ENCODE measurements at regions of chr19 and their contacts with region 1.

Region 1: DNA sequence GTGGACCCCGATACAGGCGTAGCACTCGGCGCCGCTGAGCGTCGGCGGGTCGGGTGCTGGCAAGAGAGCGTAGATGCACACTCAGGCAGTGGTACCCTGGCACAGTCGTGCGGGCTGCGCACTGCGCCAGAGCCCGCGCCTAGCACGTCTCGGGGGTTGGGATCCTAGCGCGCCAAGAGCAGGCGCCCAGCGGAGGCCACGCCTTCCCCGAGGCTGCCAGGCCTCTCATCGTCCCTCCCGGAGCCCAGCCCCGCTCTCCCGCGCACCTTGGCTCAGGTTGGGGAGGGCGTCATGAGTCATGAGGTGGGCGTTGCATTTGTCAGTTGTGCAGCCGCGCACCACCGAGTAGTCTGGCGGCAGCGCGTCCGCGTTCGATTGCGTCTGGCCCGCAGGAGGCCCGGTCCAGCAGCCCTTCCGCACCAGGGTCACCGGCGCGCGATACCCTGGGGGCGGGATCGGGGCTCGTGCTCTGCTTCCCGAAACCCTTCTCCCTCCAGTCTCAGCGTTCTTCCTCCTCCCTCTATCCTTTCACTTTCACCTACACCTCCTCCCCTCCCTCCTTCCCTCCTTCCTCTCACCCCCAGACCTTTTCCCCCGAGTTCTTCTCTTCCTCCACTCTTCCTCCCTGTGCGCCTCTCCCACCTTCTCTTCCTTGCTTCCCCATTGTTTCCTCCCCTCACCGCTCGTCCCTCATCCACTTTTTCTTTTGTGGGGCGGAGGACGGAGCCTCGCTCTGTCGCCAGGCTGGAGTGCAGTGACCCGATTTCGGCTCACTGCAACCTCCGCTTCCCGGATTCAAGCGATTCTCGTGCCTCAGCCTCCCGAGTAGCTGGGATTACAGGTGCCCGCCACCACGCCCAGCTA is 3.5 kb downstream of the LYPD5 start:
- DNase-seq: peak; percentile 71 to 80
- H3K4me3 ChIP-seq: peak overlapping the region; percentile 52 to 68 (median 61)
- H3K27ac ChIP-seq: peak overlapping the region; percentile 41 to 65
- H3K4me1 ChIP-seq: no peaks in the 10 kb centered on the region
- H3K27me3 ChIP-seq: no peaks in the 10 kb centered on the region
- CTCF ChIP-seq: no peak
- POLR2A ChIP-seq: no peak

Region 2: GRCh38 chr19:43769296-43770050 is 29.3 kb before region 1 on chr19:
- intact Hi-C with region 1: loop called (anchors 2 kb)
- DNase-seq: no peak
- H3K4me3 ChIP-seq: no peak overlapping the region
- H3K27ac ChIP-seq: peak overlapping the region; percentile 57 to 63
- H3K4me1 ChIP-seq: peaks cover 0 to 5% of the 10 kb centered on the region in 2 donors
- H3K27me3 ChIP-seq: no peaks in the 10 kb centered on the region
- CTCF ChIP-seq: no peak
- POLR2A ChIP-seq: no peak

Region 3: DNA sequence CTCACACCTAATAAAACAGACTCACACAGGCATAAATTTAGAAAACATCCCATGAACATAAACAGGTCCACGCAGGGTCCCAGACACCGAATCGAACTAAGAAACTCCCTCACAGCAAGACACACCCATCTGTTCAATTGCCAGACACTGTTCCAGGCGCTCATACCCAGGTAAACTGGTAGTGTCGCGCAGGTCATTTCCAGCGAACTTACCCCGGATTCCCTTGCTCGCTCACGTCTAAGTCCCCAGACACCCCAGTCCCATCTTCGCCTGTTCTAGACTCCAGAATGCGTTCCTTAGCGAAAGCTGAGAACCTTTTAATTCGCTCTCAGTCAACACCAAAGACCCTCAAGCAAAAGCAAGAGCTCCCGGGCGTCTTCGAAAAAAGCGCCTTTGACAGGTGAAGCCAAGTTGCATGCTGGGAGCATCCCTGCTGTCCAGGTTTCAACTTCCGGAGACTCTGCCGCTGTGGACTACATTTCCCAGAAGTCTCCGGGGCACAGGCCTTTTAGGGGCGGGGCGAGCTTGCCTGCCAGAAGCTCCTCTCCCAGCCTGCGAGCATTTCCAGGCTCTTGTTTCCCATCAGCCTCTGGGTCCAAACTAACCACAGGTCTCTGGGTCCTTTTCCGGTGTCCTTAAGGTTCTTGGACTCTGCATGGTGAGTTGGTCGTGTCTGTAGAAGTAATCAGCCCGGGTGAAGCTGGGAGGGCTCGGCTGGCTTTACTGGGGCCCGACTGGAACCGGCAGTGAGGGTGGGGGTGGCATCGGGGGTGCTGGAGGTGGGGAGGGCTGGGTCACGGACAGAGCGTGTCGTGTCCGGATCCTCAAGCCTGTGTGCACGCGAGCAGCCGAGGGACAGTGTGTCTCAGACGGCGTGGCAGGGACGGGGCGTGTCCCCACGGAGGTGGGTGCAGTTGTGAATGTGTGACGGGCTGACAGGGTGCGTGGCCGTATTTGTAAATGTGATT is 28.3 kb after region 1 on chr19 and contains the start of gene ZNF283:
- intact Hi-C with region 1: no loop called
- DNase-seq: peak; percentile 85 to 88
- H3K4me3 ChIP-seq: peak within 1 kb of the TSS; percentile 57 to 71 (median 71)
- H3K27ac ChIP-seq: peak within 1 kb of the TSS; percentile 59 to 62
- H3K4me1 ChIP-seq: no peaks in the 10 kb centered on the region
- H3K27me3 ChIP-seq: no peaks in the 10 kb centered on the region
- CTCF ChIP-seq: no peak
- POLR2A ChIP-seq: no peak
- total RNA-seq, gene ZNF283: 6.9 to 19.6 (median 13.8) TPM

Region 4: GRCh38 chr19:43842007-43842406 is 43.2 kb after region 1 on chr19:
- intact Hi-C with region 1: no loop called
- DNase-seq: no peak
- H3K4me3 ChIP-seq: no peak overlapping the region
- H3K27ac ChIP-seq: no peak overlapping the region
- H3K4me1 ChIP-seq: no peaks in the 10 kb centered on the region
- H3K27me3 ChIP-seq: no peaks in the 10 kb centered on the region
- CTCF ChIP-seq: no peak
- POLR2A ChIP-seq: no peak

Region 5: DNA sequence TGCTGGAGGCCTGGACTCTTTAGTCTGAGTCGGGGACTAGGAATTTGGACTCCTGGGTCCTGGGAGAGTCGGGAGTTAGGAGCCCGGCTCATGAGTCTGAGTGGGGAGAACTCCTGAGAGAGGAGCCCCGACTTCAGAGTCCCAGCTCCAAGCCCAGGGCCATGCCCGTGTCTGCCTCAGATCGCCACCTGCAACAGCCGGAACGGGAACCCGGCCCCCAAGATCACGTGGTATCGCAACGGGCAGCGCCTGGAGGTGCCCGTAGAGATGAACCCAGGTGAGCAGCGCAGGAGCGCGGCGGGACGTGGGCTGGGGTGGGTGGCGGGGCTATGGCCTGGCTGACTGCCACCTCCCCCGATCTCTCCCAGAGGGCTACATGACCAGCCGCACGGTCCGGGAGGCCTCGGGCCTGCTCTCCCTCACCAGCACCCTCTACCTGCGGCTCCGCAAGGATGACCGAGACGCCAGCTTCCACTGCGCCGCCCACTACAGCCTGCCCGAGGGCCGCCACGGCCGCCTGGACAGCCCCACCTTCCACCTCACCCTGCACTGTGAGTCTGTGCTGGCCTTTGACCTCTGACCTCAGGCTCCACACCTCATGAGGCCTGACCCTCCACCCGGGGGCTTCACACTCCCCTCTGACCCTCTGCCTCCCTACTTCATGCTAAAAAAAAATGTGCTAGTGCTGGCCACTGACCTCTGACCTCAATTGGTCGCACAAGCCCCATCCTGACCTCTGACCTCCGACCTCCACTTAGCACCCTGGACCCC is 1014.5 kb after region 1 on chr19:
- intact Hi-C with region 1: no loop called
- DNase-seq: no peak
- H3K4me3 ChIP-seq: no peak overlapping the region
- H3K27ac ChIP-seq: no peak overlapping the region
- H3K4me1 ChIP-seq: peaks cover 4 to 6% of the 10 kb centered on the region in 2 donors
- H3K27me3 ChIP-seq: no peaks in the 10 kb centered on the region
- CTCF ChIP-seq: no peak
- POLR2A ChIP-seq: no peak